PC-9 (cell line): ENCODE measurements at regions of chr4 and their contacts with region 1.

Region 1: DNA sequence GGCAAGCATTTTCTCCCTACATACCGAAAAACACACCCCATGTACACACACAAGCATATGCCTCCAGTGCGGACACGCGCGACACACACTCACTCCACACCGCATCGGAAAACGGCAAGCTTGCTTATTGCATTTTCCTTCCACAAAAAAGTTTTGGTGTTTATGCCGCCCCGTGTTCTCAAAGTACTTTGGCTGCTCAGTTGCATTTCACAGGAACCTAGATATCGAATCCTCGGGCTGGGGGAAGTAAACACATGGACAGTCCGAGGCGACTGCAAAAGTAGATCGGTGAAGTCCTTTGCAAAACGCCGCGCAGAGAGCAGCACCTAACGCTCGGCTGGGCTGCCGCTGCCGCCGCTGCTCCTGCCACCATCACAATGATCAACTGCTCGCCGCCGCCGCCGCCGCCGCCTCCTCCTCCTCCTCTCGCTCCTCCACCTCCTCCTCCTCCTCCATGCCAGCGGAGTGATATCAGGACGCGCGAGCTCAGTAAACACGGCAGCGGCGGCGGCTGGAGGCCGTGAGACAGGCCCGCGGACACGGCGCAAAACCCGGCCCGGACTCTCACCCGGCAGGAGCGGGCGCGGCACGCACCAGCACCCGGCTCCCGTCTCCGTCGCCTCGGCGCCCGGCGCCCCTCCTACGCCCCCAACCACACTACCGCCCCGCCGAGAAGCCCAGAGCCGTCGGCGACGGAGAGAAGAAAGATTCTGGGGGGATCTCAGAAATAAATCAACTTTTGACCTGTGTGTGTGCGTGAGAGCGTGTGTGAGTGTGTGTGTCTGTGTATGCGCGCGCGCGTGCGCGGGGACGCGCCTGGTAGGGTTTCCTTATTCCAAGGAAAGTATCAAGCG is at the start of gene MAML3:
- DNase-seq: peak; percentile 74 to 92
- H3K4me3 ChIP-seq: peak within 1 kb of the TSS; percentile 87
- H3K27ac ChIP-seq: peak within 1 kb of the TSS; percentile 100
- H3K4me1 ChIP-seq: peaks cover 19% of the 10 kb centered on the region
- H3K27me3 ChIP-seq: no peaks in the 10 kb centered on the region
- CTCF ChIP-seq: no peak
- total RNA-seq, gene MAML3: 10.5 and 15.2 TPM in 2 replicates

Region 2: GRCh38 chr4:139740531-139741041 is 413.4 kb before region 1 on chr4:
- CTCF ChIA-PET with region 1: no interaction called
- POLR2A ChIA-PET with region 1: no interaction called
- intact Hi-C with region 1: loop called (anchors 5 kb)
- DNase-seq: peak in 1 of 2 experiments; percentile 58
- H3K4me3 ChIP-seq: no peak overlapping the region
- H3K27ac ChIP-seq: no peak overlapping the region
- H3K4me1 ChIP-seq: no peaks in the 10 kb centered on the region
- H3K27me3 ChIP-seq: no peaks in the 10 kb centered on the region
- CTCF ChIP-seq: no peak

Region 3: DNA sequence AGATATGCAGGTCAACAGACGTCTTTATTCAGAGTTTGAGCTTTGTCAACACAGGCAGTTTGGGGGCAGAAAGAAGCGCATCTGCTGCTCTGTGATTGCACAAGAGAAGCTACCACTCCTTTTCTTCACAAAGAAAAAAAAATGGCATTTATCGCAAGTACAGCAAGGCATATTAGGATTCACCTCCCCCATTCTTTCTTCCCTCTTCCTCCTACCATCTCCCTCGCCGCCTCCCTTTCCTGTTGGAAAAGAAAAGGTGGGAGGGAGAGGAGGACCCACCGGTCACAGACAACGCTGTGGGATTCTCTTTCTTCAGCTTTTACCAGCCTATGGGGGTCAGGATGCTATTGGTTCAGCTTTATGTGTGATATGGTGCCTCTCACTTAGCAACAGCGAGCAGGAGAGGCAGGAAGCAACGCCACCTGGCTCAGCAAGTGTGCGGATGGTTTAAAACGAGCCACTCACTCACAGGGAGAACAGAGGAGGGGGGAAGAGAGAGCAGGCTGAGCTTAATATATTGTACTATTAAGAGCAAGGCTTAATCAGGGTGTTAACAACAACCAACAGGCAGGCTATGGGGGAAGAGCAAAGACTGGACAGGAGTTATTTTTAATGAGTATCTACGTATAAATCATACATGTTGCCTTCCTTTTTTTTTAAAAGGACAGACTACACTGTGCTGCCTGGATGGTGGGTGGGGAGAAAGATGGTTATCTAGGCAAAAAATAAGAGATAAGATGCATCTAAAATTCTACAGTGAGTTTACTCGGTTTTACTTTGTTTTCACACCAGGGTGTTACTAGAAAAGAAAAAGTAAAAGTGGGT is 104.7 kb before region 1 on chr4:
- CTCF ChIA-PET with region 1: interaction called, 4 read pairs
- POLR2A ChIA-PET with region 1: interaction called, 7 read pairs
- intact Hi-C with region 1: loop called (anchors 1 kb)
- DNase-seq: peak; percentile 59 to 62
- H3K4me3 ChIP-seq: peak overlapping the region; percentile 56
- H3K27ac ChIP-seq: peak overlapping the region; percentile 96
- H3K4me1 ChIP-seq: peaks cover 62% of the 10 kb centered on the region
- H3K27me3 ChIP-seq: no peaks in the 10 kb centered on the region
- CTCF ChIP-seq: no peak

Region 4: DNA sequence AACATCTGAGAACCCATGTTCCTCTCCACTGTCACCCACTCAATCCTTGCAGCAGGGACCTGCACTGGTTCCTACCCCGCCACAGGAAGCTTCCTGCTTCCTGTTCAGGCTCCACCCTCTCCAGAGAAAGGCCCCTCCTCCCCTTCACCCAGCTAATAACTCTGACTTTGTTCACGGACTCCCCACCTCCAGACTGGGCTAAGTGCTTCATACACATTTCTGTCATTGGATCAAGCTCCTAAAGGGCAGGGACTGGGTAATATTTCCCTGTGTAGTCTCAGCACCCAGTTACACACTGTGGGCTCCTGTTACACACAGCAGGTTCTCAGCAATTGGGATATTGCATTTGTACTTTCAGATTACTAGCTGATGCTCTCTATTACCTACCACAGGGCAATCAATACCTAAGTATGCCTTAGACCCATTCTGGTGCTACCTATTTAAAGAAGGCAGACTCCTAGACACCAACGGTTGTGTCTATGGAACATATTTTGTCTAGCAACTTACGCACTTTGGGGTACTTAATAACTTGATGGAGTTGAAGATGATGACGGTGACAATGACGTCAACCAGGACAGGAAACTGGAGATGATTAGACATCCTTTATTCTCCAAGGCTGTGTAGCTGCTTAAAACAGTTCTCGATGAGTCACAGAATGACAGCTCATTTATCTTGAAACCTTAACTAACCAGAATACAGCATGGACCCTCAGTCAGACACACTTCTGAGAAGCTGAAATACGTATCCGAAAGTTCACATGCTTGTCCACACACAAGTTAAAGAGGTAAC is 58.1 kb before region 1 on chr4:
- CTCF ChIA-PET with region 1: no interaction called
- POLR2A ChIA-PET with region 1: interaction called, 11 read pairs
- intact Hi-C with region 1: loop called (anchors 1 kb)
- DNase-seq: peak; percentile 46 to 68
- H3K4me3 ChIP-seq: no peak overlapping the region; the same call in 1 of the 2 replicates
- H3K27ac ChIP-seq: peak overlapping the region; percentile 99
- H3K4me1 ChIP-seq: peaks cover 98% of the 10 kb centered on the region
- H3K27me3 ChIP-seq: no peaks in the 10 kb centered on the region
- CTCF ChIP-seq: no peak

Region 5: GRCh38 chr4:140252742-140253555 is 99.0 kb after region 1 on chr4:
- CTCF ChIA-PET with region 1: interaction called, 3 read pairs
- POLR2A ChIA-PET with region 1: interaction called, 9 read pairs
- intact Hi-C with region 1: loop called (anchors 1 kb)
- DNase-seq: peak; percentile 40 to 76
- H3K4me3 ChIP-seq: peak overlapping the region; percentile 59
- H3K27ac ChIP-seq: peak overlapping the region; percentile 73
- H3K4me1 ChIP-seq: peaks cover 69% of the 10 kb centered on the region
- H3K27me3 ChIP-seq: no peaks in the 10 kb centered on the region
- CTCF ChIP-seq: peak; percentile 84

Region 6: GRCh38 chr4:140359562-140360427 is 205.8 kb after region 1 on chr4:
- CTCF ChIA-PET with region 1: no interaction called
- POLR2A ChIA-PET with region 1: no interaction called
- intact Hi-C with region 1: loop called (anchors 2 kb)
- DNase-seq: peak; percentile 52 to 75
- H3K4me3 ChIP-seq: no peak overlapping the region
- H3K27ac ChIP-seq: no peak overlapping the region
- H3K4me1 ChIP-seq: no peaks in the 10 kb centered on the region
- H3K27me3 ChIP-seq: no peaks in the 10 kb centered on the region
- CTCF ChIP-seq: peak; percentile 94